Common myeloid progenitor, CD34-positive (primary cell): ENCODE measurements at regions of chr5 and their contacts with region 1.

Region 1: DNA sequence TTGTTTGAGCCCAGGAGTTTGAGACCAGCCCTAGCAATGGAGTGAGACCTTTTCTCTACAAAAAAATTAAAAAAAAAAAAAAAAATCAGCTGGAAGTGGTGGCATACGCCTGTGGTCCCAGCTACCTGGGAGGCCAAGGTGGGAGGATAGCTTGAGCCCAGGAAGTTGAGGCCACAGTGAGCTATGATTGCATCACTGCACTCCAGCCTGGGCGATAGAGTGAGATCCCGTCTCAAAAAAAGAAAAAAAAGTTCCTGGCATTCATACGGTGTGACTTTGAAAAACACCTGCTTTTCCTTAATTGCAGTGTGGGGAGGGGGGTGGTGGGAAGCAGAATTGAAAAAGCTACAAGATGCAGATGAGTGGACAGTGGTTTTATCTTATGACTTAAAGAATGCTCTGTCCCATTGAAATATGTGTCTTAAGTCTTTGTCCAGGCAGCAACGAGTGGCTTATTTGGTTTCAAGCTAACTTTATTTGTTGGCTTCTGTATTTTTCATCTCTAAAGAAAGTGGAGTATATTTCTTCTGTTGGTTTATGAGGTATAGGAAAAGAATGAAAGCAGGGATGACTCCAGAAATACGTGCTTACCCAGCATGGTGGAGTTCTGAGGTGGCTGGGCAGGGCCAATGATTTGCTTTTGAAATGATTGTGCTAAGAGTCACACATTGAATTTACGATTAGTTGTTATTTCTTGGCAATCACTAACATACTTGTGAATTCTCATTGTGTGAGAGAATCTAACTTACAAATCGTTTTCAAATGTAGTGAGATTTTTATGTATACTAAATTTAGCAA is 27.8 kb downstream of the ROPN1L start:
- DNase-seq: no peak
- H3K4me3 ChIP-seq: no peak overlapping the region
- H3K27ac ChIP-seq: no peak overlapping the region
- H3K4me1 ChIP-seq: peaks cover 1 to 23% (median 21%) of the 10 kb centered on the region in 4 experiments
- H3K27me3 ChIP-seq: no peaks in the 10 kb centered on the region

Region 2: GRCh38 chr5:10825897-10826644 is 356.6 kb after region 1 on chr5:
- CTCF ChIA-PET with region 1: no interaction called
- POLR2A ChIA-PET with region 1: interaction called, 13 read pairs
- DNase-seq: no peak
- H3K4me3 ChIP-seq: no peak overlapping the region
- H3K27ac ChIP-seq: no peak overlapping the region
- H3K4me1 ChIP-seq: peaks cover 0 to 5% (median 0%) of the 10 kb centered on the region in 4 experiments
- H3K27me3 ChIP-seq: no peaks in the 10 kb centered on the region